Stomach (tissue), 19 donors: ENCODE measurements at regions of chr1 and their contacts with region 1.

Region 1: GRCh38 chr1:1122078-1122811 is 6.4 kb upstream of the C1orf159 start:
- DNase-seq: peak; percentile 90 to 93
- H3K4me3 ChIP-seq: peak overlapping the region; percentile 29 to 38 (median 31)
- H3K27ac ChIP-seq: peak overlapping the region in 2 of 5 donors; percentile 47 to 63
- H3K4me1 ChIP-seq: peaks cover 41 to 62% (median 54%) of the 10 kb centered on the region in 4 donors
- H3K27me3 ChIP-seq: peaks cover 0 to 47% (median 0%) of the 10 kb centered on the region in 3 donors
- CTCF ChIP-seq: peak in 5 of 7 experiments; percentile 84 to 92 (median 89)
- EP300 ChIP-seq: no peak
- POLR2A ChIP-seq: no peak

Region 2: DNA sequence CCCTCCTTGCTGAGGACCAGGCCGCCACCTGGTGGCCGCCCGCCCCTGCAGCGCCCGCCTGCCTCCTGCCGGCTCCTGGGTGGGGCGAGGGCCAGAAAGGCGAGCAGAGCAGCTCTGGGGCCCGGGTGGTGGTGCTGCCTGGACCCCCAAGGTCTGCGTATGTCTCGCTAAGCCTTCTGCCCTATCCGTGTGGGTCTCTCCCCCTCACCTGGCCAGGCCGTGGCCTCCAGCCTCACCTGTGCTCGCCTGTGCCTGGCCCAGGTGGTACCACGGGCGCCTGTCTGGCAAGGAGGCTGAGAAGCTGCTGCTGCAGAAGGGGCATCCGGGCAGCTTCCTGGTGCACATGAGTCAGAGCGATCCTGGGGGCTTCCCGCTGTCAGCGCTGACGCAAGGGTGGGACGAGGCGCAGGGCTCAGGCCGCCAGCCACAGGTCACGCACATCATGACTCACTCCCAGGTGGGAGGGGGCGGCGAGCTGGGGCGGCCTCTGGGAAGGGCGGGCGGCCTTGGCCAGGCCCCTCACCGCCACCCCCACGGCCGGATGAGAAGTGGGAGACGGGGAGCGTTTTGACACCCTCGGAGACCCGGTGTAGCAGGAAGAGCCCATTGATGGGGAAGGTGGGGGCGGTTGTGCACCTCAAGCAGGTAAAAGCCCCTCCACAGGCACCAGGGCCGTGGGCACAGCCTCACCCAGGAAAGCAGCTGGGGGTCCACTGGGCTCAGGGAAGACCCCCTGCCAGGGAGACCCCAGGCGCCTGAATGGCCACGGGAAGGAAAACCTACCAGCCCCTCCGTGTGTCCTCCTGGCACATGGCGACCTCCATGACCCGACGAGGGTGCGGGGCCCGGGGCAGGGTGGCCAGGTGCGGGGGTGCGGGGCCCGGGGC is 58.1 kb before region 1 on chr1:
- intact Hi-C with region 1: no loop called
- DNase-seq: peak; percentile 77 to 85
- H3K4me3 ChIP-seq: peak overlapping the region in 2 of 4 donors; percentile 5 to 29
- H3K27ac ChIP-seq: peak overlapping the region in 1 of 5 donors; percentile 8
- H3K4me1 ChIP-seq: peaks cover 41 to 65% (median 63%) of the 10 kb centered on the region in 4 donors
- H3K27me3 ChIP-seq: peaks cover 8 to 89% (median 70%) of the 10 kb centered on the region in 3 donors
- CTCF ChIP-seq: peak in 5 of 7 experiments; percentile 87 to 94 (median 90)
- EP300 ChIP-seq: no peak
- POLR2A ChIP-seq: no peak

Region 3: GRCh38 chr1:1173793-1174415 is 51.7 kb after region 1 on chr1 and contains the start of gene TTLL10:
- intact Hi-C with region 1: loop called (anchors 5 kb)
- DNase-seq: peak in 1 of 2 donors; percentile 80
- H3K4me3 ChIP-seq: no peak within 1 kb of the TSS
- H3K27ac ChIP-seq: no peak within 1 kb of the TSS
- H3K4me1 ChIP-seq: peaks cover 5 to 32% (median 19%) of the 10 kb centered on the region in 4 donors
- H3K27me3 ChIP-seq: peaks cover 0 to 94% (median 26%) of the 10 kb centered on the region in 3 donors
- CTCF ChIP-seq: no peak
- EP300 ChIP-seq: no peak
- POLR2A ChIP-seq: no peak
- total RNA-seq, gene TTLL10: 6.4 TPM in 1 of 5 donors, not detected in the others

Region 4: GRCh38 chr1:1225238-1225845 is 103.1 kb after region 1 on chr1:
- intact Hi-C with region 1: loop called (anchors 5 kb)
- DNase-seq: peak in 1 of 2 donors; percentile 89
- H3K4me3 ChIP-seq: no peak overlapping the region
- H3K27ac ChIP-seq: peak overlapping the region in 2 of 5 donors; percentile 2 to 9
- H3K4me1 ChIP-seq: peaks cover 11 to 72% (median 44%) of the 10 kb centered on the region in 4 donors
- H3K27me3 ChIP-seq: no peaks in the 10 kb centered on the region
- CTCF ChIP-seq: no peak
- EP300 ChIP-seq: no peak
- POLR2A ChIP-seq: no peak

Region 5: GRCh38 chr1:1291548-1292441 is 169.6 kb after region 1 on chr1:
- intact Hi-C with region 1: loop called (anchors 10 kb)
- DNase-seq: peak; percentile 88 to 92
- H3K4me3 ChIP-seq: no peak overlapping the region
- H3K27ac ChIP-seq: no peak overlapping the region
- H3K4me1 ChIP-seq: peaks cover 12 to 23% (median 19%) of the 10 kb centered on the region in 4 donors
- H3K27me3 ChIP-seq: peaks cover 0 to 11% (median 6%) of the 10 kb centered on the region in 3 donors
- CTCF ChIP-seq: peak in 5 of 7 experiments; percentile 61 to 78 (median 74)
- EP300 ChIP-seq: no peak
- POLR2A ChIP-seq: no peak